ENCODE measurements at regions of chr16 and their contacts with region 1.

Region 1: DNA sequence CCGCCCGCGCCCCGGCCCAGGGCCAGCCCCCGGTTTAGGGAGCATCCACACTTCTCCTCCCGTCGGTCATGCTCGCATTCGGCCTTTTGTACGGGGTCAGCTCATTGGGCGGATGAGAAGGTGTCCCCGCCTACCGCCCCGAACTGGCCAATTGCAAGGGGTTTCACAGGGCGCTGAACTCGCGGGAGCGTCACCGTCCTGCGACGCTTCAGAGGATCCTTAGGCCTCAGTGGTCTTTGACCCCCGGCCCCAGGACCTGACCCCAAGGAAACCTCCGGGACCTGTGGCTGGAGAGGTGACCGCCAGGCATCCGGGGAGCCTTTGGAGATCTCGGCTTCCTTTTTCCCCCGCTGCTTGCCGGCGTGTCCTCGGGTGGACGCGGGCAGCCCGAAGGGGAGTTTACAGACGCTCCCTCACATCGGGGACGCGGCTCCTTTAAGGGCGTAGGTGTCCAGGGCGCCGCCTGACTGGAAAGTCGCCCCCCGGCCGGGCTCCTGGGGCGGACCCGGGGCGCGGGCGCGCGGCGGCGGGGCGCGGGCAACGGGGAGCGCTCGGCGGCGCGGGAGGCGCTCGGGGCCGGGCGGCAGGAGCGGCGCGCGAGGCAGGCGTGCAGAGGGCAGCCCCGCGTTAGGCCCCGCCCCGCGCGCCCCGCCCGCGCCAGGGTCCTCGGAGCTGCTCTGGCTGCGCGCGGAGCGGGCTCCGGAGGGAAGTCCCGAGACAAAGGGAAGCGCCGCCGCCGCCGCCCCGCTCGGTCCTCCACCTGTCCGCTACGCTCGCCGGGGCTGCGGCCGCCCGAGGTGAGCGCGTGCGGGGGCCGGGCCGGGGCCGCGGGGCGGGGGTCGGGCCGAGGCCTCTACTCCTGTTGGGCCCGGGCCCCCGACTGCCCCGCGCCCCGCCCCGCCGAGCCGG is at the start of gene UBE2I:
- DNase-seq: peak; percentile 90 to 99
- H3K4me3 ChIP-seq: peak within 1 kb of the TSS; percentile 100
- H3K27ac ChIP-seq: peak within 1 kb of the TSS; percentile 92
- H3K4me1 ChIP-seq: peaks cover 21% of the 10 kb centered on the region
- H3K27me3 ChIP-seq: no peaks in the 10 kb centered on the region
- CTCF ChIP-seq: no peak
- total RNA-seq, gene UBE2I: 218 and 271 TPM in 2 replicates

Region 2: GRCh38 chr16:396605-397004 is 912.6 kb before region 1 on chr16:
- CTCF ChIA-PET with region 1: no interaction called
- POLR2A ChIA-PET with region 1: interaction called, 14 read pairs
- intact Hi-C with region 1: no loop called
- DNase-seq: peak in 1 of 2 experiments; percentile 41
- H3K4me3 ChIP-seq: peak overlapping the region; percentile 58
- H3K27ac ChIP-seq: no peak overlapping the region
- H3K4me1 ChIP-seq: peaks cover 16% of the 10 kb centered on the region
- H3K27me3 ChIP-seq: no peaks in the 10 kb centered on the region
- CTCF ChIP-seq: no peak

Region 3: GRCh38 chr16:1413684-1414531 is 104.7 kb after region 1 on chr16:
- CTCF ChIA-PET with region 1: interaction called, 3 read pairs
- POLR2A ChIA-PET with region 1: no interaction called
- intact Hi-C with region 1: loop called (anchors 10 kb)
- DNase-seq: peak in 1 of 2 experiments; percentile 56
- H3K4me3 ChIP-seq: peak overlapping the region; percentile 78
- H3K27ac ChIP-seq: peak overlapping the region; percentile 55
- H3K4me1 ChIP-seq: peaks cover 36% of the 10 kb centered on the region
- H3K27me3 ChIP-seq: no peaks in the 10 kb centered on the region
- CTCF ChIP-seq: peak; percentile 76

Region 4: DNA sequence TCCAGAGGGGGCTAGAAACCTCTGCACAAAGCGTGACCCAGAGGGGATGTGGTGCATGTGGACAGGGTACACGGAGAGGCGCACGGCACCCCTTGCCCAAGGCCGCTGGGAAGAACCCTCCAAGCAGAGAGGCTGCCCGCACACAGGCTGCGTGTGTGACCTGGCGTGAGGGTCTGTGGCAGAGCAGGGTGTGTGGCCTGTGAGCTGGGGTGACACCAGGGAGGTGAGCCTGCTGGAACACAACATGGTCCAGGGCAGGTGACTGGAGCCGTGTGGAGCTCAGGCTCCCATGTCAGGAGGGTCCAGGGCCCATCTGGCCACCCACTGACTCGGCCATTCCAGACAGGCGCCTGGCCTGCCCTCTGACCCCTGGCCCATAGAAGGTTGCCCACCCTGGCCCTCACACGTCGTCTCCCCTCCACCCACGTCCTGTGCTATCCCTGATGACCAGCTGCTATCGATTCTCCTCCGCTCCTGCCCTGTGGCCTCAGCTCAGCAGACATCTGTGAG is 209.4 kb after region 1 on chr16:
- CTCF ChIA-PET with region 1: no interaction called
- POLR2A ChIA-PET with region 1: no interaction called
- intact Hi-C with region 1: no loop called
- DNase-seq: no peak
- H3K4me3 ChIP-seq: no peak overlapping the region
- H3K27ac ChIP-seq: no peak overlapping the region
- H3K4me1 ChIP-seq: no peaks in the 10 kb centered on the region
- H3K27me3 ChIP-seq: no peaks in the 10 kb centered on the region
- CTCF ChIP-seq: no peak

Measured in PC-9 (cell line).